Right cardiac atrium (tissue), 5 donors: ENCODE measurements at regions of chr4 and their contacts with region 1.

Region 1: GRCh38 chr4:137408527-137409177 is 123.6 kb downstream of the PCDH18 start:
- DNase-seq: no peak
- ATAC-seq: no peak
- H3K4me3 ChIP-seq: no peak overlapping the region
- H3K27ac ChIP-seq: no peak overlapping the region
- H3K4me1 ChIP-seq: no peaks in the 10 kb centered on the region
- H3K27me3 ChIP-seq: no peaks in the 10 kb centered on the region

Region 2: DNA sequence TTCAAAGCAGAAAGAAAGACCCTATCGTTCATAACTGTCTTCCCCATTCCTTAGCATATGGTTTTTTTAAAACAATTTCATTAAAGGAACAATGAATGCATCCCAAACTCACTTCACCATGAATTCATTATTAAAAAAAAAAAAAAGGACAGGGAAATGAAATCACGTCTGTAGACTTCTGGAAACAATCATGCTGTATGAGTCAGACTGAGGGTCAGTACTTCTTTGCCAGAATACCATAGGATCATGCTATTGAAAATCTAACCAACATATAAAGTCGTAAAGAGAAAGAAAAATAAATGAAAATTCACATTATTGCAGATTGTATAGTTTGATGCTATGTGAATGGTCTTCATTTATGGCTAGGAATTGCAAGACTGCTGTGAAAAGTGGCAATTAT is 20.7 kb before region 1 on chr4:
- intact Hi-C with region 1: no loop called
- DNase-seq: no peak
- ATAC-seq: no peak
- H3K4me3 ChIP-seq: no peak overlapping the region
- H3K27ac ChIP-seq: no peak overlapping the region
- H3K4me1 ChIP-seq: no peaks in the 10 kb centered on the region
- H3K27me3 ChIP-seq: no peaks in the 10 kb centered on the region

Region 3: DNA sequence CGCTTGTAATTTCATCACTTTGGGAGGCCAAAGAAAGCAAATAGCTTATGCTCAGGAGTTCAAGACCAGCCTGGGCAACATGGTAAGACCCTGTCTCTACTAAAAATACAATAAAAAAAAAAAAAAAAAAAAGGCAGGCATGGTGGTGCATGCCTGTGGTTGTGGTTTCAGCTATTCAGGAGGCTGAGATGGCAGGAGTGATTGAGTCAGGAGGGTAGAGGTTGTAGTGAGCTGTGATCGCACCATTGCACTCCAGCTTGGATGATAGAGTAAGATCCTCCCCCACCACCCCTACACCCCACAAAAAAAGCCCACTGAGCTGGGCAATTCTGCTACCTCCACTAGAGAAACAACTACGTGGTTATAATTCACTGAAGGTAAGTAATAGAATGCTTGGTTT is 242.5 kb after region 1 on chr4:
- intact Hi-C with region 1: no loop called
- DNase-seq: no peak
- ATAC-seq: no peak
- H3K4me3 ChIP-seq: no peak overlapping the region
- H3K27ac ChIP-seq: no peak overlapping the region
- H3K4me1 ChIP-seq: no peaks in the 10 kb centered on the region
- H3K27me3 ChIP-seq: no peaks in the 10 kb centered on the region

Region 4: GRCh38 chr4:137703195-137703594 is 294.5 kb after region 1 on chr4:
- intact Hi-C with region 1: loop called in 1 of 4 experiments (anchors 5 kb)
- DNase-seq: no peak
- ATAC-seq: peak; percentile 36 to 90
- H3K4me3 ChIP-seq: no peak overlapping the region
- H3K27ac ChIP-seq: no peak overlapping the region
- H3K4me1 ChIP-seq: no peaks in the 10 kb centered on the region
- H3K27me3 ChIP-seq: no peaks in the 10 kb centered on the region